ENCODE measurements at regions of chr2 and their contacts with region 1.

Region 1: DNA sequence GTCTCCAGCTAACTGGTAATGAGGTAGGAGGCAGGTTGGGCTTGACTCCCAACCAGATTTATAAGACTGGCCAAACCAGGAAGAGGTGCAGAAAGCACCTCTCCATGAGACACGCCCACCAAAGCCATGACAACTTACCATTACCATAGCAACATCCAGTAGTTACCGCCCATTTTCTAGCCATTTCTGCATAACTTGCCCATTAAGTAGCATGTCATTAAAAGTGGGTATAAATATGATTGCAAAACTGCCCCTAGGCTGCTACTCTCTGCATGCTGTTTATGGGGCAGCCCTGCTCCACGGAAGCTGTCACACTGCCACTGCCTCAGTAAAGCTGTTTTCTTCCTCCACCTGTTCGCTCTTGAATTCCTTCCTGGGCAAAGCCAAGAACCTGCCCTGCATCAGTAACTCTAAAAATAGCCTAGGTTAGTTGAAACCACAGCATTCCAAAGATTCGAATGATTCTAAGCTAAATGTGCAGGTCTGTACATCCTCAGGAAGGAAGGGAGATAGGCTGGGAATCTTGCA is 131.9 kb downstream of the ATL2 start:
- DNase-seq: no peak
- ATAC-seq: peak; percentile 65
- H3K4me3 Mint-ChIP-seq: no peak overlapping the region
- H3K27ac Mint-ChIP-seq: no peak overlapping the region
- H3K4me1 Mint-ChIP-seq: peaks cover 6% of the 10 kb centered on the region; the same call in 1 of the 2 replicates
- H3K27me3 Mint-ChIP-seq: no peaks in the 10 kb centered on the region
- CTCF ChIP-seq: no peak

Region 2: GRCh38 chr2:37934591-37935513 is 310.3 kb before region 1 on chr2:
- CTCF ChIA-PET with region 1: no interaction called
- POLR2A ChIA-PET with region 1: no interaction called
- DNase-seq: no peak
- ATAC-seq: no peak
- H3K4me3 Mint-ChIP-seq: no peak overlapping the region
- H3K27ac Mint-ChIP-seq: no peak overlapping the region
- H3K4me1 Mint-ChIP-seq: no peaks in the 10 kb centered on the region
- H3K27me3 Mint-ChIP-seq: no peaks in the 10 kb centered on the region; the same call in 1 of the 2 replicates
- CTCF ChIP-seq: no peak

Region 3: GRCh38 chr2:38274286-38275276 is 29.4 kb after region 1 on chr2:
- CTCF ChIA-PET with region 1: interaction called, 11 read pairs
- POLR2A ChIA-PET with region 1: no interaction called
- DNase-seq: no peak
- ATAC-seq: peak; percentile 15; the same call in 1 of the 2 replicates
- H3K4me3 Mint-ChIP-seq: no peak overlapping the region
- H3K27ac Mint-ChIP-seq: no peak overlapping the region
- H3K4me1 Mint-ChIP-seq: peaks cover 53% of the 10 kb centered on the region
- H3K27me3 Mint-ChIP-seq: peaks cover 46% of the 10 kb centered on the region
- CTCF ChIP-seq: peak; percentile 31